Astrocyte of the cerebellum (primary cell): ENCODE measurements at regions of chr5 and their contacts with region 1.

Region 1: GRCh38 chr5:61055434-61056006 is 106.7 kb downstream of the SMIM15 start:
- DNase-seq: peak; percentile 47
- H3K4me3 ChIP-seq: no peak overlapping the region
- CTCF ChIP-seq: peak; percentile 63

Region 2: DNA sequence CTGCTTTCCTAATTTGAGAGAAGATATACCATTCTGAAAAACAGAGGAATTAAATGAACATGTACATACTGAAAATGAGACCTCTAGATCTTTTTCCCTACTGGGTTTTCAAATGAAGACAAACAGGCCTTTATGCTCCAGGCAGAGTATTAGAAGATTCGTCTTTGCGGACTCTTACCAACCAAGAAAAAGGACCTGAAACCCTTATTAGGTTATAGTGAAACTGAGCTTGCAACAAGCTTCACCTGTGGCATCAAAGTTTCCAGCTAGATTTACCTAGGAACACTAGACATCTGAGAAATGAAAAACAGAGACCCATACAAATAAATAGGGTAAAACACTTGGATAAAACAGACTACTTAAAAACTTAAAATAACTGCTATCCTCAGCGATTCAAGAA is 60.4 kb after region 1 on chr5:
- in situ Hi-C with region 1: loop called (anchors 5 kb)
- DNase-seq: no peak
- H3K4me3 ChIP-seq: no peak overlapping the region
- CTCF ChIP-seq: no peak